SK-N-SH (cell line): ENCODE measurements at regions of chr13 and their contacts with region 1.

Region 1: GRCh38 chr13:80342471-80343380 is 1.8 kb upstream of the SPRY2 start:
- DNase-seq: peak; percentile 84
- H3K4me3 ChIP-seq: peak overlapping the region; percentile 65 to 76
- H3K27ac ChIP-seq: peak overlapping the region; percentile 95 to 100; a peak in 3 of 4 replicates
- H3K4me1 ChIP-seq: peaks cover 5 to 8% of the 10 kb centered on the region in 2 experiments; a peak in 3 of 4 replicates
- H3K27me3 ChIP-seq: no peaks in the 10 kb centered on the region
- CTCF ChIP-seq: peak; percentile 85
- EP300 ChIP-seq: no peak
- RAD21 ChIP-seq: peak; percentile 80

Region 2: GRCh38 chr13:79799059-79799867 is 543.5 kb before region 1 on chr13:
- CTCF ChIA-PET with region 1: interaction called, 5 read pairs
- POLR2A ChIA-PET with region 1: interaction called, 17 read pairs
- DNase-seq: peak; percentile 70
- H3K4me3 ChIP-seq: no peak overlapping the region
- H3K27ac ChIP-seq: peak overlapping the region; percentile 24 to 99; a peak in 3 of 4 replicates
- H3K4me1 ChIP-seq: peaks cover 8 to 31% of the 10 kb centered on the region in 2 experiments; a peak in 3 of 4 replicates
- H3K27me3 ChIP-seq: no peaks in the 10 kb centered on the region
- CTCF ChIP-seq: no peak
- EP300 ChIP-seq: peak; percentile 86 to 95
- RAD21 ChIP-seq: peak; percentile 37; the same call in 1 of the 2 replicates

Region 3: DNA sequence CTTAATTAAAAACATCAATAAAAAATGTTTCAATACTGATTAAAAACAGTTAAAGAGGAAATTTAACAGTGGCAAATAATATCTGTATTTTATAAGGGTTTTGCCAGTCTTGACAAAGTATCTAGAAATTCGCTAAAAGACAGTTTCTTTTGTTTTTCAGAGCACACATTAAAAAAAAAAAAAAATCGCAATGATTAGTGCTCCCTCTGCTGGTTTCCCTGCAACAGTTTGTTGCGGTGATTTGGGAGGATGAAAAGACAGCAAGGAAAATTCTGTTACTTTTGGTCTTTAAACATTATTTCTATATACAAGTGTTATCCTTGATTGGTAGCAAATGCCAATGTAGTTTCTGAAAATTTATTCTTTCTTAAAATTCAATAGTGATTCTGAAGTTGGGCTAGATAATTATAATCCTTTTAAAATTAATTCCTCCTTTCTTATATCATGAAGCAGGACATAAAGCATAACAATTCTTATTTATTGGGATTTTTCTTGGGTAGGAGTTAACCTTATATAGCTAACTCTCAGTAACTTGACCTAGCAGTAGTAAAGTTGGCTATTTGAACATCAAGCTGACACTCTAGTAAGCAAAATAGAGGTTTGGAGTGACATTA is 21.3 kb after region 1 on chr13:
- CTCF ChIA-PET with region 1: interaction called, 20 read pairs
- POLR2A ChIA-PET with region 1: no interaction called
- DNase-seq: peak; percentile 56
- H3K4me3 ChIP-seq: no peak overlapping the region
- H3K27ac ChIP-seq: peak overlapping the region in 1 of 2 experiments; percentile 31; a peak in 2 of 4 replicates
- H3K4me1 ChIP-seq: peaks cover 10 to 24% of the 10 kb centered on the region in 2 experiments; a peak in 3 of 4 replicates
- H3K27me3 ChIP-seq: no peaks in the 10 kb centered on the region
- CTCF ChIP-seq: peak; percentile 97
- EP300 ChIP-seq: no peak
- RAD21 ChIP-seq: peak; percentile 80

Region 4: DNA sequence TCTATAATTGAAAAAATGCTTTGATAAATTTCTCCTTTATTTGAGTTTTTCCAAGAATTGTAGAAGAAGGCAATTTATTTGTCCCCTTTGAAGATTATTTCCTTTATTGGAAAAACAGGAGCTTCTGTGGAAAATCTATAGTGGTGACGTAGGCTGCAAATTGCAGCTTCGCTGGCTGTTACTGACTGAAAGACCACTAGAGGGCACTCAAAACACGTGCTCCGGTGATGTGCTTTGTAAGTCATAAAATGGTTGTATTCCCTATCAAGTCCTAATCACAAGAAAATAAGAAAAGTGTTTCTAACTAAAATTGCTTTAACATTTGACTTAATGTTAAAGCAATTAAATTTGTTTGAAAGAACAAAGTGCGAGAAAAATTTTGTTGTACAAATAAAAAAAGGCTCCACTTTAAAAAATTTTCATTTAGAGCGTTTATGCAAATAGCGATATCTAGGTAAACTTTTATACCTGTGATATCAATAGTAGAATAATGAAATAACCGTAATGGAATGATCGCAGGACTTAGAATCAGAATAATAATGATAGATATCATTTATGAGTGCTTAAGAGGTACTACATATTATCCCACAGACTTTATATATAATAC is 636.4 kb after region 1 on chr13:
- CTCF ChIA-PET with region 1: interaction called, 11 read pairs
- POLR2A ChIA-PET with region 1: no interaction called
- DNase-seq: peak; percentile 59
- H3K4me3 ChIP-seq: peak overlapping the region in 1 of 2 experiments; percentile 60; a peak in 1 of 4 replicates
- H3K27ac ChIP-seq: no peak overlapping the region
- H3K4me1 ChIP-seq: no peaks in the 10 kb centered on the region
- H3K27me3 ChIP-seq: no peaks in the 10 kb centered on the region
- CTCF ChIP-seq: peak; percentile 97
- EP300 ChIP-seq: no peak
- RAD21 ChIP-seq: peak; percentile 88